T-cell (primary cell): ENCODE measurements at regions of chr5 and their contacts with region 1.

Region 1: GRCh38 chr5:73591102-73591695 is 25.7 kb downstream of the UTP15 start:
- DNase-seq: peak in 20 of 35 experiments; percentile 3 to 84 (median 36)
- ATAC-seq: peak; percentile 61 to 72 (median 67)
- H3K4me3 ChIP-seq: no peak overlapping the region
- H3K4me3 Mint-ChIP-seq: no peak overlapping the region
- H3K27ac ChIP-seq: no peak overlapping the region
- H3K27ac Mint-ChIP-seq: no peak overlapping the region
- H3K4me1 ChIP-seq: no peaks in the 10 kb centered on the region
- H3K4me1 Mint-ChIP-seq: no peaks in the 10 kb centered on the region
- H3K27me3 ChIP-seq: no peaks in the 10 kb centered on the region
- H3K27me3 Mint-ChIP-seq: no peaks in the 10 kb centered on the region

Region 2: DNA sequence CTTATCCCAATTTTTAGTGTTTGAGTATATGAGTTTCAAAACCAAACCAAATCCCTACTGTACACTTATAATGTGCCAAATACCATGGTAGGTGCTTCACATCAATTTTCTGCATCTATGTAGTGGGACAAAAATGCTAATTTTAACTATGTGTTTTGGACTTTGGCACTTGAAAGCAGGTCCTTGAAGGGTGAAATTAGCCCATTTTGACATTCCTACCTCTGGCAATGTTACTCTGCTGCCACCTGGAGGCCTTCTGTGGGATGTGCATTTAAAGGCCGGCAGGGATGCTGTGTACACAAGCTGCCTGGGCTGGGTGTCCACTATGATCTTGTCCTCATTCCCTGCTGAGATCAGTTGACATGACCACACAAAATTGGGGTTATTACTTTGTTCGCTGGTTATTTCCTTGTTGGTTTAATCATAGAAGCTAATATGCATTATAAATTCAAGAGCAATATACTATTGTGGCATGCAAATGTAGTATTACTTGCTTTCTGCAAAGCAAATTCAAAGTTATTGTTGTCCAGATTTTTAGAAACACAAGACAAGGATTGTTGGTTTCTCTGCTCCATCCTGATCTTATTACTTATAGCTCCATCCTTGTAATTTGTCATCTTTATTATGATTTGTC is 201.6 kb after region 1 on chr5:
- CTCF ChIA-PET with region 1: interaction called, 28 to 47 read pairs
- POLR2A ChIA-PET with region 1: no interaction called
- DNase-seq: peak; percentile 16 to 78 (median 45)
- ATAC-seq: peak in 3 of 4 experiments; percentile 42 to 79 (median 64)
- H3K4me3 ChIP-seq: no peak overlapping the region
- H3K4me3 Mint-ChIP-seq: no peak overlapping the region
- H3K27ac ChIP-seq: no peak overlapping the region
- H3K27ac Mint-ChIP-seq: no peak overlapping the region
- H3K4me1 ChIP-seq: no peaks in the 10 kb centered on the region
- H3K4me1 Mint-ChIP-seq: no peaks in the 10 kb centered on the region
- H3K27me3 ChIP-seq: peaks cover 0 to 2% of the 10 kb centered on the region in 2 experiments
- H3K27me3 Mint-ChIP-seq: peaks cover 18 to 26% of the 10 kb centered on the region in 2 donors

Region 3: GRCh38 chr5:74261866-74262265 is 670.7 kb after region 1 on chr5:
- CTCF ChIA-PET with region 1: no interaction called
- POLR2A ChIA-PET with region 1: no interaction called
- DNase-seq: no peak
- ATAC-seq: no peak
- H3K4me3 ChIP-seq: no peak overlapping the region
- H3K4me3 Mint-ChIP-seq: no peak overlapping the region
- H3K27ac ChIP-seq: no peak overlapping the region
- H3K27ac Mint-ChIP-seq: no peak overlapping the region
- H3K4me1 ChIP-seq: no peaks in the 10 kb centered on the region
- H3K4me1 Mint-ChIP-seq: no peaks in the 10 kb centered on the region
- H3K27me3 ChIP-seq: no peaks in the 10 kb centered on the region
- H3K27me3 Mint-ChIP-seq: peaks cover 1 to 3% of the 10 kb centered on the region in 2 donors